Cardiac septum (tissue), 1 donor: ENCODE measurements at regions of chr13 and their contacts with region 1.

Region 1: GRCh38 chr13:97221989-97222700 is at the start of gene MBNL2:
- DNase-seq: peak; percentile 95
- total RNA-seq, gene MBNL2: 67.6 TPM

Region 2: GRCh38 chr13:97242755-97243497 is 20.8 kb after region 1 on chr13:
- intact Hi-C with region 1: loop called (anchors 2 kb)
- DNase-seq: peak; percentile 91

Region 3: GRCh38 chr13:97257800-97258799 is 36.0 kb after region 1 on chr13:
- intact Hi-C with region 1: loop called (anchors 5 kb)
- DNase-seq: no peak

Region 4: GRCh38 chr13:97344265-97345175 is 122.4 kb after region 1 on chr13:
- intact Hi-C with region 1: loop called (anchors 2 kb)
- DNase-seq: no peak